Sigmoid colon (tissue), 7 donors: ENCODE measurements at regions of chr20 and their contacts with region 1.

Region 1: DNA sequence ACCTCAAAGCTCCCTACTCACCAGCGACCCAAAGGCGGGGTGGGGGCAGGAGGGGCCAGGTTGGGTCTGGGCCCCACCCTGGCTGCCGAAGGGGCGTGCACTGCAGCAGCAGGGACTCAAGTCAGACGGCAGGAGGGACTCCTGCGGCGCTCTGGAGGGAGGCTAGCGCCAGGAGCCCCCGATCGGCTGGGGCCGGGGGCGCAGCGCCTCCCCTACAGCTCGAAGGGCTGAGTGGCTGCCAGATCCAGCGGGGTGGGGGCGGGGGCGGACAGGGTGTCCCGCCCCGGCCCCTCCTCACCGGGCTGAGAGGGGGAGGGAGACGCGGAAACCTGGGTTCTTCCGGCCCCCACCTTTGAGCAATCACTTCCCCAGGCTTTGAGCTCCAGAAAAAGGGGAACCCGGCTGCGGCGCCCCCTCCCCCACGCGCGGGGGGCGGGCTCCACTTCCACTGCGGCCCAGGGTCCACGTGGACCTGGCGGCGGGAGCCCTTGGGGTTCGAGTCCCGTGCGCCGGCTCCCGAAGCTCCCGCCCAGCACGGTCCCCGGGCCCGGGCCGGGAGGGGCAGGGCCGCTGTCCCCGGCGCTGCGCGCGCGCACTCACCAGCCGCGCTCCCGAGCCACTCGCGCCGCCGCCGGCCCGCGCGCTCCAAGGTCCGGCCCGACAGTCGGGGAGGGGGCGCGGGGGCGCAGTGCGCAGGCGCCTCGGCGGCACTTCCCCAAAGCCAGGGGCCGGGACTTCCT is at the start of gene RGS19:
- DNase-seq: peak; percentile 85
- H3K4me3 ChIP-seq: peak within 1 kb of the TSS; percentile 60 to 85 (median 70)
- H3K27ac ChIP-seq: peak within 1 kb of the TSS; percentile 70 to 81 (median 74)
- H3K4me1 ChIP-seq: peaks cover 0 to 33% (median 30%) of the 10 kb centered on the region in 4 donors
- H3K27me3 ChIP-seq: peaks cover 6 to 21% (median 9%) of the 10 kb centered on the region in 3 donors
- CTCF ChIP-seq: no peak
- EP300 ChIP-seq: no peak
- POLR2A ChIP-seq: no peak
- total RNA-seq, gene RGS19: 7.5 to 12.3 (median 10.5) TPM

Region 2: GRCh38 chr20:63101781-63102719 is 977.4 kb before region 1 on chr20:
- intact Hi-C with region 1: loop called (anchors 5 kb)
- DNase-seq: peak; percentile 70
- H3K4me3 ChIP-seq: peak overlapping the region; percentile 29 to 66 (median 57)
- H3K27ac ChIP-seq: peak overlapping the region; percentile 56 to 76 (median 58)
- H3K4me1 ChIP-seq: peaks cover 0 to 28% (median 19%) of the 10 kb centered on the region in 4 donors
- H3K27me3 ChIP-seq: peaks cover 0 to 40% (median 17%) of the 10 kb centered on the region in 3 donors
- CTCF ChIP-seq: no peak
- EP300 ChIP-seq: no peak
- POLR2A ChIP-seq: no peak

Region 3: GRCh38 chr20:63574156-63574828 is 505.2 kb before region 1 on chr20 and contains the start of gene HELZ2:
- intact Hi-C with region 1: no loop called
- DNase-seq: peak; percentile 90
- H3K4me3 ChIP-seq: peak within 1 kb of the TSS; percentile 88 to 97 (median 92)
- H3K27ac ChIP-seq: peak within 1 kb of the TSS; percentile 78 to 87 (median 81)
- H3K4me1 ChIP-seq: peaks cover 0 to 29% (median 27%) of the 10 kb centered on the region in 4 donors
- H3K27me3 ChIP-seq: no peaks in the 10 kb centered on the region
- CTCF ChIP-seq: no peak
- EP300 ChIP-seq: no peak
- POLR2A ChIP-seq: no peak
- total RNA-seq, gene HELZ2: 9.5 to 48.1 (median 15.4) TPM

Region 4: DNA sequence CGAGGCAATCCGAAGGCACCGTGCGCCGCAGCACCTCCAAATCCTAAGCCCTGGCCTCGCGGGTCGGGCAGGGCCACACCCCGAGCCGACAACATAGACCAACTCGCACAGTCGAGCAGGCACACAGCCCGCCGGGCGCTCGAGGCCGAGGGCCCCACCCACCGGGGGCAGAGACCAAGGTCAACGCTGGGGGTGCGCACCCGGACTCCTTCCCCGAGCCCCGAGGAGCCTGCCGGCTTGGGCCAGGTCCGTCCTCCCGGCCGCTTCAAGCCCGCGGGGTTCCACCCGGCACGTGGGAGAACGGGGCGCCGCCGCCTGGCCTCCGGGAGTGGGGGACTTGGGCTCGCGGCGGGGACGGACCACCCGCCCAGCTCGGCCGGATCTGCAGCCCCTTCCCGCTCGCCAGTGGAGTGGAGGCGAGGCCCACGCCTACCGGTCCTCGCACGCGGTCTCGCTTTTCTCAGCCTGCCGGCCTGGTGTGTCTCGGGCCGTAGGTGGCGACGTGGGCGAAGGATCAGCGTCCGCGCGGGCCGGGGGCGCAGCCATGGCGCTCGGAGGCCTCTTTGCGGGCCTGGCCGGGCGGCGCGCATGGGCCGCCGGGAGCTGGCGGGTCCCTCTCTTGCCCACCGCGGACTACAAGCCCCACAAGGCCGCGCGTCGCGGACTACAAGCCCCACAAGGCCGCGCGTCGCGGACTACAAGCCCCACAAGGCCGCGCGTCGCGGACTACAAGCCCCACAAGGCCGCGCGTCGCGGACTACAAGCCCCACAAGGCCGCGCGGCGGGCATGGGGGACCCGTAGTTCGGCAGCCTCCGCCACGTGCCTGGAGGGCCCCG is 123.4 kb before region 1 on chr20 and contains the start of gene UCKL1:
- intact Hi-C with region 1: no loop called
- DNase-seq: peak; percentile 97
- H3K4me3 ChIP-seq: peak within 1 kb of the TSS; percentile 91 to 100 (median 98)
- H3K27ac ChIP-seq: peak within 1 kb of the TSS; percentile 90 to 99 (median 97)
- H3K4me1 ChIP-seq: peaks cover 0 to 61% (median 57%) of the 10 kb centered on the region in 4 donors
- H3K27me3 ChIP-seq: no peaks in the 10 kb centered on the region
- CTCF ChIP-seq: peak in 1 of 4 experiments; percentile 4
- EP300 ChIP-seq: no peak
- POLR2A ChIP-seq: peak; percentile 53 to 54
- total RNA-seq, gene UCKL1: 21.1 to 36.3 (median 24.9) TPM

Region 5: DNA sequence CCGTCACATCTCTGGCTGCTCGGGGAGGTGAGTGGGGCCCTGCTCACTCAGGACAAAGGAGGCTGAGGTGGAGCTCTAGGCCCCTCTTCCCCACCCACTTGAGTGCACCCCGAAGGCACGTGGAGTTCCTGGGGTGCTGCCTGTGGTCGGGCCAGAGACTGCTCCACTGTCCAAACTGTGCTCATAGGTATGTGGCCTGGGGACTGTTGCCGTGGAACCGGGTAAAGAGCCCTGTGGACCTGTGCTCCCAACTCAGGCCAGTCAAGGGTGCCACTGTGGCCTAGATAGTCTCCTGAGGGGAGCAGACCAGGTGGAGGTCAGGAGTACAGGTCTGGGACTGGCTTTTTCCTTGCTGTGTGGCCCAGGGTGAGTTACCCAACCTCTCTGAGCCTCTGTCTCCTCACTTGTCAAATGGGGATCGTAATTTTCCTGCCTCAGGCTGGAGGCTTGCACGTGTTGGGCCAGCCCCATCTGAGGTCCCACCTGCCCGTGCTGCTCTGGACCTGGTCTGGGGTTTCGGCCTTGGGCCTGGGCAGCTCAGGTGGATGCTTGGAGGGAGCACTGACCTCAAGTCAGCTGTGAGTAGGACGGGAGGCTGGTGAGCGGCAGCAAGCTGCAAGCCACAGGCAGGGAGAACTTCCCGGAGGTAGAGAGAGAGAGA is 40.4 kb after region 1 on chr20:
- intact Hi-C with region 1: loop called (anchors 1 kb)
- DNase-seq: peak; percentile 57
- H3K4me3 ChIP-seq: no peak overlapping the region
- H3K27ac ChIP-seq: no peak overlapping the region
- H3K4me1 ChIP-seq: peaks cover 0 to 8% (median 5%) of the 10 kb centered on the region in 4 donors
- H3K27me3 ChIP-seq: peaks cover 0 to 25% (median 11%) of the 10 kb centered on the region in 3 donors
- CTCF ChIP-seq: no peak
- EP300 ChIP-seq: no peak
- POLR2A ChIP-seq: no peak

Region 6: DNA sequence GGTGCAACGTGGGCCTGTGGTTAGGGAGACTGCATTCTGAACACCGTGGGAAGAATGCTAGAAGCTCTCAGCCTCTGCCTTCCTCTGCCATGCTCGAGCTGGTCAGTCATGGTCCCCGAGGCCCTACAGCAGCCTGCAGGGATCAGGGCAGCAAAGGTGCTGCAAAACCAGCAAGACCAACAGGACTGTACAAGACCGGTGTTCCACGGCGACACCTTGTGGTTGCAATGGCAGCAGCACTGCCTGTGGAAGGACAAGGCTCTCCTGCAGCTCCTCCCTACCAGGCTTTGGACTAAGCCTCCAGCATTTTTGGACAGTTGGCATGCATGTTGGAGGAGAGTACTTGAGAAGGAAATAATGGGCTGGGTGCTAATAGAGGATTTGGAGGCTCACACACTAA is 66.0 kb after region 1 on chr20:
- intact Hi-C with region 1: no loop called
- DNase-seq: peak; percentile 42
- H3K4me3 ChIP-seq: no peak overlapping the region
- H3K27ac ChIP-seq: no peak overlapping the region
- H3K4me1 ChIP-seq: no peaks in the 10 kb centered on the region
- H3K27me3 ChIP-seq: peaks cover 0 to 50% (median 25%) of the 10 kb centered on the region in 3 donors
- CTCF ChIP-seq: no peak
- EP300 ChIP-seq: no peak
- POLR2A ChIP-seq: no peak